GM10248 (cell line): ENCODE measurements at regions of chr12 and their contacts with region 1.

Region 1: GRCh38 chr12:32312049-32312670 is 87.2 kb upstream of the FGD4 start:
- DNase-seq: peak; percentile 38
- CTCF ChIP-seq: peak; percentile 40

Region 2: DNA sequence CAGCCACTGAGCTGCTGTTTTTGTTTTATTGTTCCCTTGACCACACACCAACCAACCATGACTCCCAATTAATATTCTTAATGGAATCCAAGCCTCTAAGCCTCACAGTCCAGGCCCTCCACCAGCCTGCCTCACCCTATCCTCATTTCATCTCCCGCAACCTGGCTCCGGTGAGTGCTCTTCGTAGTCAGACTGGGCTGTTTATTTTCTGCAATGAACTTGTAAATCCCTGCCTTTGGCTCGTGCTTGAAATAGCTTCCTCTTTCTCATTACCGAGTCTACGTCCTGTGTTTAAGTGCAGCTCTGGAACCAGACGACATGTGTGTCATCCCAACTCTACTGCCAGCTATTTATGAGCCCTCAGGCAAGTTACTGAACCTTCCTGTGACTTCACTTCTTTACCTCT is 665.1 kb before region 1 on chr12:
- CTCF ChIA-PET with region 1: interaction called, 24 read pairs
- POLR2A ChIA-PET with region 1: no interaction called
- DNase-seq: no peak
- CTCF ChIP-seq: no peak

Region 3: DNA sequence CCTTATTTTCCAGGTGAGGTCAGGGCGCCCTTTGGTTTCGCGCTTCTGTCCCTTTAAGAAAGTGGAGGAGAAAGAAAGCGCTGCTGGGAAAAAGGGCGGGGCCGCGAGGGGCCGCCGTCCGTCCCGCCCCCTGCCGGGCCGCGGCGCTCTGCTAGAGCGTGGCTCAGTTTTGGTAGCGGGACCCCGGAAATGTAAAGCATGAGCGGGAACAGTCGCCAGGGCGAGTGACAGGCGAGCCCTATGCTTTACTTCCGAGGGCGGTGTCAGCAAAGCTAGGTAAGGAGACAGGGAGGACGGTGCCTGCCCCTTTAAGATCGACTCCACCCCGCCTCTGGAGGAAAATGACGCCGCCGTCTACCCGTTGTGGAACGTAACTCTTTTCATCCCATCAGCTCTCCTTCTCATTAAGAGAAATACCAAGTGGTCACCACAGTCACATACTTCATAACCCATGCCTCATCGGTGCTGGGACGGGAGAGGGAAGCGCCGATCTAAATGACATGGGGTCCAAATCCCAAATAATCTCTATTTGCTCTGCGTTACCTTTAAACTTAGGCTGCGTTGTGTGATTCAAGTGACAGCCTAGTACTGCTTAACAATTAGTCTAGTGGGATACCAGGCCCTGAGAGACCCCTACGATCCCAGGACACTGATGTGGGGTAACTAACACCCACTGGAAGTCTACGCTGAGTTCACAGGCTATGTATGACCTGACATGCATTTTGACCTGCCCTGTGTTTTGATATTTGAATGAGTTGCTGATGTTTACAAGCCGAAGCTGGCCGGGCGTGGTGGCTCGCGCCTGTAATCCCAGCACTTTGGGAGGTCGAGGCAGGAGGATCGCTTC is 652.9 kb before region 1 on chr12 and contains the start of gene ETFBKMT:
- CTCF ChIA-PET with region 1: interaction called, 13 read pairs
- POLR2A ChIA-PET with region 1: no interaction called
- DNase-seq: peak; percentile 92
- CTCF ChIP-seq: no peak

Region 4: DNA sequence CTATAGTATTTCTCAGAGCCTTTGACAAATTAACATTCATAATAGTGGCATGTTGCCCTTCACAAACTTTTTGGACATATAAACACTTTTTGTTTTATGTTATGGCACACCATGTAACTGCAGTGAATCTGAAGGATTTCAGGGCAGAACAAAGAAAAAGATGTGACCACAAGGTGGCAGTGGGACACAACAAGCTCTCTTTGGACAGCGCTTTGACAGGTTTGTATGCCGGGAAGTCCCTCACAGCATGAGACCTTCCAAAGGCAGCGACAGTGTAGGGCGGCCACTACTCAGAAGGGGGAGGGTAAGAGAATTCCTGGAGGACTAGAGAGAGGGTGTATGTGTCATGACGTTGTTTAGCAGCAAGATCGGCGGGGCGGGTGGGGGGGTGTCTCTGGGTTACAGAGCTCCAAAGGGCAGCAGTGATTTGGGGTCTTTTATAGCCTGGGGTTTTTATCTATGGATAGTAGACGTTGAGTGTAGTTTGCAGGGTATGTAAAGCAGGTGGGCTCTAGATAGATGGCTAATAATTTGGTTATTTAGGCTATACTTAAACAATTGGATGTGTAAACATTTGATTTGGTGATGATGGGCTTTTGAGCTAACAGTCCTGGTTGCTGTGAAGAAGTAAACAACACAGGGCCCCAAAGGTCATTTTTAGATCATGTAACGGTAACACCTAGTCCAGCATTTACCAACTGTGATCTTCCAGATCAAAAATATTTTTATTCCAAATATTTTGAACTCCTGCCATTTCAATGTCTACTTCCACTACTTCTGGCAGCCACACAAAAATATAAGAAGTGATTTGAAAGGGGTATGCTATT is 629.8 kb before region 1 on chr12:
- CTCF ChIA-PET with region 1: interaction called, 20 read pairs
- POLR2A ChIA-PET with region 1: no interaction called
- DNase-seq: peak; percentile 78
- CTCF ChIP-seq: peak; percentile 66

Region 5: GRCh38 chr12:31950088-31950487 is 362.1 kb before region 1 on chr12:
- CTCF ChIA-PET with region 1: no interaction called
- POLR2A ChIA-PET with region 1: no interaction called
- DNase-seq: no peak
- CTCF ChIP-seq: no peak

Region 6: DNA sequence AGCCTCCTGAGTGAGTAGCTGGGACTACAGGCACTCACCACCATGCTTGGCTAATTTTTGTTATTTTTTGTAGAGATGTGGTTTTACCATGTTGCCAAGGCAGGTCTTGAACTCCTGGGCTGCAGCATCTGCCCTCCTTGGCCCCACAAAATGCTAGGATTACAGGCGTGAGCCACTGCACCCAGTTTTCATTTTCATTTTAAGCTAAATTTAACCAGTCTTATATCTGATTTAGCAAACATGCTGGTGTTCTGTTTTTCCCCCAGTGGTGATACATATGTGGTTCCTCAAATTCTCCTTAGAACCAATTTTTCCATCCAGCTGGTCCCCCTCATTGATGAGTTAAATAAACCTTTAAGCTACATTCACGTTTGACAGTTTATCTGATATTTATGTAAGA is 249.3 kb before region 1 on chr12:
- CTCF ChIA-PET with region 1: interaction called, 50 read pairs
- POLR2A ChIA-PET with region 1: no interaction called
- DNase-seq: no peak
- CTCF ChIP-seq: no peak

Region 7: DNA sequence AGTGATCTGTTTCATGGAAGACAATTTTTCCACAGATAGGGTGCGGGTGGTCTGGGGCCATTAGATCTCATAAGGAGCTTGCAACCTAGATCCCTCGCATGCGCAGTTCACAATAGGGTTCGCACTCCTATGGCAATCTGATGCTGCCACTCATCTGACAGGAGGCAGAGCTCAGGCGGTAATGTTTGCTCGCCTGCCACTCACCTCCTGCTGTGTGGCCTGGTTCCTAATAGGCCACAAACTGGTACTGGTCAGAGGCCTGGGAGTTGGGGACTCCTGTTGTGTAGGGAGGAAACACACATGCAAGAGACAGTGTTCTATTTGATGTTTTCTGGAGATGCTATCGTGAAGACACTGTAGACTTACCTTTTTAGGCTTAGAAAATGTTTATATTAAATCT is 10.2 kb after region 1 on chr12:
- CTCF ChIA-PET with region 1: interaction called, 26 read pairs
- POLR2A ChIA-PET with region 1: no interaction called
- DNase-seq: no peak
- CTCF ChIP-seq: no peak